Posterior vena cava (tissue), 2 donors: ENCODE measurements at regions of chr9 and their contacts with region 1.

Region 1: DNA sequence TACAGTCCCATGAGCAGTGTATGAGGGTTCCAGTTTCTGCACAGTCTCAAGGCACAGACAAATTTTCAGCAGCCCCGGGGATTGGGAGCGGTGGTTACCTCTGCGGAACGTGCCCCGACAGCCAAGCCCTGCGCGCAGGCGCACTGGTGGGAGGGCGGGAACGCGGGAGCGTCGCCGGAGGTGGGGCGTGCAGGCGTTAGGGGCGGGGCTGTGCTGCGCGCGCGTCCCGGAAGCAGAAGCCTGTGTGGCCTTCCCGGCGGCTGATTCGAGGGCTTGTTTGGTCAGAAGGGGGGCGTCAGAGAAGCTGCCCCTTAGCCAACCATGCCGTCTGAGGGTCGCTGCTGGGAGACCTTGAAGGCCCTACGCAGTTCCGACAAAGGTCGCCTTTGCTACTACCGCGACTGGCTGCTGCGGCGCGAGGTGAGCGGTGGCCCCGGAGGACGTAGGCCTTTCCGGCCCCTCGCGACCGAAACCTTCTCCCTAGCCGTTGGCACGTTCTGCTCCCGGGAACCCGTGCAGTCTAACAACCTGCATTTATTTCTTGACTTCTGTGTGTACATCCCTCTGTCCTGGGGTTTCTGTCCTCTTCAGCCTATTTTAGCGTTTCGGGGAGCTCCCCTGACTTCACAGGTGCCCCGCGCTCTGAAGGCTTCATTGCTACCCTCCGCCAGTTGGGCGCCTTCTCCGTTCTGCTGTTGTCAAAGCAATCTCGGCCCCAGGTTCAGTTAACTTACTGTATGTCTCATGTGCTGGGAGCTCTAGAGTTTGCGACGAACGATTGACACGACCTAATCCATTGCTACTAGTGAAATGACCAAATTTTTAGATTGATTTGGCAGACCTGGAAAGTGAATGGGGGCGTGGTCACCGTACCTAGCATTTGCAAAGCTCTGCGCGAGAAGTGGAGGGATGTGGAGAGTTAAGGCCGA is at the start of gene GLE1:
- DNase-seq: peak; percentile 99
- total RNA-seq, gene GLE1: 14.6 to 15.5 TPM

Region 2: DNA sequence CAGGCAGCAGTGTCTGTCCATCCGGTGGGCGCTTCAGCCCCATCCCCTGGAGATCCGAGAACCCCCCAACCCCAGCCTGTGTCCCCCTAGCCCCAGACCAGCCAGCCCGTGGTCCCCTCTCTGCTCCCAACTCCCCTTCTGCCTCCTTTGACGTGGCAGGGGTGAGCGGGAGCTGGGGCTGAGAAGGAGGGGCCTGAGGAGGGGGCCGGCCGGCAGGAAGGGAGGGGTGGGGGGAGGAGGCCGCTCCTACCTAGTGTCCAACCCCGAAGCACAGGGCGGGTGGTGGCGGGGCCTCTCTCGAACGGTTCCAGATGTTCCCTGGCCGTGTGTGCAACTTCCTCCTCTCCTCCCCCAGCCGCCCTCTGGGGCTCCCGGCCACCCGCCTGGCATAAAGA is 259.9 kb before region 1 on chr9:
- intact Hi-C with region 1: no loop called
- DNase-seq: peak; percentile 95

Region 3: DNA sequence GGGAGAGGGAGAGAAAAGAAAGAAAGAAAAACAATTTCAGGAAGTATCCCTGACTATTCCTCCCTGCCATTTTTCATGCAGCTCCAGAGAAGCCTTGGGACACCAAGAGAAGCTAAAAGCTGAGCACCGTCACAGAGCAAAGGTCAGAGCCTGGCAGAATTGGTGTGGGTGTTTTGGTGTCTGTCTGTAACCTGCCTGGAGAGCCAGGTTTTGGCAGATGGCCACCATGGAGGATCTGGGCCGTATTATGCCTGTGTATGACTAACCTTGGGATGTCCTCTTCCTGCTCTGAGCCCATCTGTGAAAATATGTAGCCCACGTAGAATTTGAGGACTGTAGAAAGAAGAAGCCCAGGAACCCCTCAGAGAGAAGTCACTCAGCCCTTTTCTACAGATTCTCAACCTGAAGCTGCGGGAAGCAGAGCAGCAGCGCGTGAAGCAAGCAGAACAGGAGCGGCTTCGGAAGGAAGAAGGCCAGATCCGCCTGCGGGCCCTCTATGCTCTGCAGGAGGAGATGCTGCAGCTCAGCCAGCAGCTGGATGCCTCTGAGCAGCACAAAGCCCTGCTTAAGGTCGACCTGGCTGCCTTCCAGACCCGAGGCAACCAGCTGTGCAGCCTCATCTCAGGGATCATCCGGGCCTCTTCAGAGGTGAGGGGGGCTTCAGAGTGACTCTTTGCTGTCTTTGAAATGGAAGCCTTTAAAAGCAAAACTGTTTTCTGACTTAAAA is 18.6 kb after region 1 on chr9:
- intact Hi-C with region 1: loop called in 1 of 2 experiments (anchors 1 kb)
- DNase-seq: peak; percentile 53